A673 (cell line): ENCODE measurements at regions of chr4 and their contacts with region 1.

Region 1: DNA sequence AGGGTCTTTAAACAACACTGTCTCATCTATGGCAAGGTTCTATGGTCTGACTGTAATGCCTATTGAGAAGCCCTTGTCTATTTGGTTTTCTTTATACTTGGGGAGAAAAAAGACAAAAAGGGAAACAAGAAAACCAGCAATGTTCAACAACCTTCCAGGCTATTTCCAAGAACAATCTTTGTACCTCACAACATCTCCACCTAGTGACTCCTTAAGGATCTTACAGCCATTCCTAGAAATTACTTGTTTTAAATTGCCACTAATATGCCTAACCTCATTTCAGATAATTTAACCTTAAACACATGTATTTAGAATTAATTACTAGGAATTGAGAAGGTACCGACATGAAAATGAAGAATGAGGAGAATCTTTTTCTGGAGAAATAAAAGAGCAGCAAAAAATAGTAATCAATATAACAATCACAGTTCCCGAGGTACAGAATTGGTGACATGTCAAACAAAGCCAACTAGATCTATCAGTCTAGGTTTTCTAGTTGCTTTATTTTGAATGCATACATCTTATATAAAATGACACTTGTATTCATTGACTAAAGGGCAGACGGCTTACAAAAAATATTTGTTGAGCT is 1.6 kb upstream of the RBM46 start:
- DNase-seq: peak; percentile 46
- H3K4me3 ChIP-seq: no peak overlapping the region
- H3K27ac ChIP-seq: no peak overlapping the region
- H3K4me1 ChIP-seq: no peaks in the 10 kb centered on the region
- H3K27me3 ChIP-seq: no peaks in the 10 kb centered on the region
- CTCF ChIP-seq: peak; percentile 70

Region 2: GRCh38 chr4:154559494-154560418 is 219.7 kb before region 1 on chr4:
- CTCF ChIA-PET with region 1: no interaction called
- POLR2A ChIA-PET with region 1: no interaction called
- intact Hi-C with region 1: loop called (anchors 5 kb)
- DNase-seq: peak; percentile 70
- H3K4me3 ChIP-seq: no peak overlapping the region
- H3K27ac ChIP-seq: no peak overlapping the region
- H3K4me1 ChIP-seq: no peaks in the 10 kb centered on the region
- H3K27me3 ChIP-seq: no peaks in the 10 kb centered on the region
- CTCF ChIP-seq: peak; percentile 68

Region 3: GRCh38 chr4:154642373-154643009 is 137.0 kb before region 1 on chr4:
- CTCF ChIA-PET with region 1: interaction called, 3 read pairs
- POLR2A ChIA-PET with region 1: no interaction called
- intact Hi-C with region 1: loop called (anchors 2 kb)
- DNase-seq: no peak
- H3K4me3 ChIP-seq: no peak overlapping the region
- H3K27ac ChIP-seq: no peak overlapping the region
- H3K4me1 ChIP-seq: no peaks in the 10 kb centered on the region
- H3K27me3 ChIP-seq: no peaks in the 10 kb centered on the region
- CTCF ChIP-seq: no peak

Region 4: GRCh38 chr4:154686838-154687237 is 92.6 kb before region 1 on chr4:
- CTCF ChIA-PET with region 1: interaction called, 5 read pairs
- POLR2A ChIA-PET with region 1: no interaction called
- intact Hi-C with region 1: loop called (anchors 1 kb)
- DNase-seq: peak; percentile 29
- H3K4me3 ChIP-seq: no peak overlapping the region
- H3K27ac ChIP-seq: no peak overlapping the region
- H3K4me1 ChIP-seq: no peaks in the 10 kb centered on the region
- H3K27me3 ChIP-seq: no peaks in the 10 kb centered on the region
- CTCF ChIP-seq: peak; percentile 41; the same call in 1 of the 2 replicates

Region 5: DNA sequence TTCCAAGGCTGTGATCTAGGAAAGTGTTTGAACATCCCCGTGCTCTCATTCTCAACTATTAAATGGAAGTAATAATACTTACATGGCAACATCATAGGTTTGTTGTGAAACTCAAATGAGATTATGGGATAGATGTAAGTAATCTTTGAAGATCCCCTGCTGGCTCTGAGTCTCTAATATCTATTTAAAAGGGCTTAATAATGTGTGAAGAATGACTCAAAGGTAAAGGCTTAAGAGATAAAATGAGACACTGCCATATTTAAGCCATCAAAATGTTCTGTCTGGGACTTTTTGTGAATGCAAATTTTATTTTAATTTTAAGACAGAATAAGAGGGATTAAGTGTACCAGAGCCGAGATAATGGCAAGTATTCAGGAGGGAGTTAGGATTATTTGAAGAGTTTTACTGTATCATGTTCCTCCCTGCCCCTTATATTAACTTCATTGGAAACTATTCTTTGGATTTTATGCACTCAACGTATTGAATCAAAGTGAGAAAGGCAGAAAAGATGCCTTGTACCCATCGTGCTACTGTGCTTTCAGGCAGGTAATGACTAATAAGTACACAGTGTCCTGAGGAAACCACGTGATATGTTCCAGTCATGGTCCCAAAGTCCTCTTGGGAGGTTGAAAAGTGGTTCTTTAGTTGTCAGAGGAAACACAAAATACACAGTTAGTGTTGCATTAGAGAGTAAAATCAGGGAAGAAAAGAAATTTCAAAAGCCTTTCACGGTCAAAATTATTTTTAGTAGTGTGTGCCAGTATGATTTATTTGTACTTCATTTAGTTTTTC is 194.0 kb after region 1 on chr4:
- CTCF ChIA-PET with region 1: no interaction called
- POLR2A ChIA-PET with region 1: no interaction called
- intact Hi-C with region 1: no loop called
- DNase-seq: peak; percentile 37
- H3K4me3 ChIP-seq: no peak overlapping the region
- H3K27ac ChIP-seq: no peak overlapping the region
- H3K4me1 ChIP-seq: no peaks in the 10 kb centered on the region
- H3K27me3 ChIP-seq: no peaks in the 10 kb centered on the region
- CTCF ChIP-seq: no peak

Region 6: GRCh38 chr4:154989511-154989910 is 210.1 kb after region 1 on chr4:
- CTCF ChIA-PET with region 1: no interaction called
- POLR2A ChIA-PET with region 1: no interaction called
- intact Hi-C with region 1: no loop called
- DNase-seq: no peak
- H3K4me3 ChIP-seq: no peak overlapping the region
- H3K27ac ChIP-seq: no peak overlapping the region
- H3K4me1 ChIP-seq: no peaks in the 10 kb centered on the region
- H3K27me3 ChIP-seq: no peaks in the 10 kb centered on the region
- CTCF ChIP-seq: no peak

Region 7: DNA sequence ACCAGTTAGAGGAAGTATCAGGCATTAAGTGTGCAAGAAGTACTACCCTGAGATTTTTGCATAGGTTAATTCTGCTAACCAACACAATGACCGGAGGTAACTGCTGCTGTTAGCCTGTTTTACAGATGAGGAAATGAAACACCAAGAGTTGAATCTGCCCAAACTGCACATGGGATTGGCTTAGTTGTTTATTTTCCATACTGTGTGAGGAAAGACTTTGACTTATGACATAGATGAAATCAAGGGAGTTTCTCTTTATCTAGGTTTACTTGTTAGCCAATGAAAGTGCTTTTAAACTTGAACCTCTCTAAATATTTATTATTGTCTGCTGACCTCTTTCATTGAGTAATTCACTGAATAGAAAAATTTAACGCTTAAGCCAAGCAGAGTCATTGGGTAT is 989.6 kb after region 1 on chr4:
- CTCF ChIA-PET with region 1: no interaction called
- POLR2A ChIA-PET with region 1: no interaction called
- intact Hi-C with region 1: no loop called
- DNase-seq: no peak
- H3K4me3 ChIP-seq: no peak overlapping the region
- H3K27ac ChIP-seq: no peak overlapping the region
- H3K4me1 ChIP-seq: no peaks in the 10 kb centered on the region
- H3K27me3 ChIP-seq: no peaks in the 10 kb centered on the region
- CTCF ChIP-seq: no peak